ENCODE measurements at regions of chr2 and their contacts with region 1.

Region 1: GRCh38 chr2:54704688-54705605 is 18.5 kb upstream of the EML6 start:
- DNase-seq: peak in 6 of 9 donors; percentile 26 to 69 (median 58)
- ATAC-seq: peak; percentile 74
- H3K4me3 ChIP-seq: no peak overlapping the region
- H3K4me3 Mint-ChIP-seq: no peak overlapping the region
- H3K27ac ChIP-seq: no peak overlapping the region
- H3K27ac Mint-ChIP-seq: no peak overlapping the region
- H3K4me1 ChIP-seq: no peaks in the 10 kb centered on the region
- H3K4me1 Mint-ChIP-seq: peaks cover 0 to 18% (median 0%) of the 10 kb centered on the region in 7 donors
- H3K27me3 ChIP-seq: no peaks in the 10 kb centered on the region
- H3K27me3 Mint-ChIP-seq: peaks cover 10 to 59% (median 15%) of the 10 kb centered on the region in 5 donors

Region 2: GRCh38 chr2:53740170-53740569 is 964.8 kb before region 1 on chr2:
- CTCF ChIA-PET with region 1: no interaction called
- POLR2A ChIA-PET with region 1: no interaction called
- intact Hi-C with region 1: no loop called
- DNase-seq: no peak
- ATAC-seq: no peak
- H3K4me3 ChIP-seq: no peak overlapping the region
- H3K4me3 Mint-ChIP-seq: no peak overlapping the region
- H3K27ac ChIP-seq: no peak overlapping the region
- H3K27ac Mint-ChIP-seq: no peak overlapping the region
- H3K4me1 ChIP-seq: no peaks in the 10 kb centered on the region
- H3K4me1 Mint-ChIP-seq: peaks cover 5 to 26% (median 17%) of the 10 kb centered on the region in 7 donors
- H3K27me3 ChIP-seq: no peaks in the 10 kb centered on the region
- H3K27me3 Mint-ChIP-seq: no peaks in the 10 kb centered on the region

Region 3: DNA sequence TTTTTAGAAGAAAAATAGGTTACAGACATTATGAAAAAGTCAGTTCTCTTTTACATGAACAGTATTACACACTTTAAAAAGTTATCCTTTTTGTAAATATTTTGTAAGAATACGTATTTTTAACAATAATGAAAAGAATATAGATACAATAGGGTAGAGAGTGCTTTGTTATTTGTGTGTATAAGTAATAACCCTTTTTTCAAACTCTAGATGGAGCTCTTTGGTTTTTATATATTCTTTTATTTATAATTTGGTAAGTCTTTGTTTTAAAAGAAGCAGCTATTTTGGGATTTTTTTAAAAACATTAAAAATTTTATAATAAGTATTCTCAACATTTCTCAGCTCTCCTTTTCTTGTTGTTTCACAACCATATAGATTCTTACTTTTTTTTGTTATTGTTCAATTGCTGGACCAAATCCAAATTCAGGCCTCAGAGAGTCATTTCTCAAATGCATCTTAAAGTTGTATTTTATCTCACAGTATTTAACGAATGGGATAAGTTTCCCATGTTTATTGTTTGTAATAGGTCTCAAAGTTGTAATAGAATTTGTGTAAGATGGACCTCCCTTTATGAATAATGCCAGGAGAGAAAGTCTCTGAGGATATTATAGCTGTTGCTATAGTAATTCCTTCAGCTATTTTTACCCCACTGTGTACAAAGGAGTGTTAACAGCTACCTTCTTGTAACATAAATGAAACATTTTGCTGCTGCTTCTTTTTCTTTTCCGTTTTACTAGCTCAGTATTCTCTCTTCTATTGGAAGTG is 543.1 kb before region 1 on chr2:
- CTCF ChIA-PET with region 1: interaction called, 3 read pairs
- POLR2A ChIA-PET with region 1: no interaction called
- intact Hi-C with region 1: loop called in 1 of 2 experiments (anchors 2 kb)
- DNase-seq: no peak
- ATAC-seq: no peak
- H3K4me3 ChIP-seq: no peak overlapping the region
- H3K4me3 Mint-ChIP-seq: no peak overlapping the region
- H3K27ac ChIP-seq: no peak overlapping the region
- H3K27ac Mint-ChIP-seq: no peak overlapping the region
- H3K4me1 ChIP-seq: no peaks in the 10 kb centered on the region
- H3K4me1 Mint-ChIP-seq: no peaks in the 10 kb centered on the region
- H3K27me3 ChIP-seq: no peaks in the 10 kb centered on the region
- H3K27me3 Mint-ChIP-seq: no peaks in the 10 kb centered on the region

Region 4: GRCh38 chr2:54558188-54559005 is 146.6 kb before region 1 on chr2:
- CTCF ChIA-PET with region 1: interaction called, 5 read pairs
- POLR2A ChIA-PET with region 1: no interaction called
- intact Hi-C with region 1: loop called in 1 of 2 experiments (anchors 1 kb)
- DNase-seq: peak; percentile 48 to 75 (median 64)
- ATAC-seq: peak; percentile 82
- H3K4me3 ChIP-seq: peak overlapping the region; percentile 94
- H3K4me3 Mint-ChIP-seq: peak overlapping the region; percentile 86 to 100 (median 98)
- H3K27ac ChIP-seq: peak overlapping the region; percentile 86
- H3K27ac Mint-ChIP-seq: peak overlapping the region; percentile 90 to 98 (median 96)
- H3K4me1 ChIP-seq: peaks cover 10 to 11% of the 10 kb centered on the region in 2 donors
- H3K4me1 Mint-ChIP-seq: peaks cover 29 to 65% (median 59%) of the 10 kb centered on the region in 7 donors
- H3K27me3 ChIP-seq: no peaks in the 10 kb centered on the region
- H3K27me3 Mint-ChIP-seq: no peaks in the 10 kb centered on the region

Region 5: GRCh38 chr2:54665436-54665856 is 39.5 kb before region 1 on chr2:
- CTCF ChIA-PET with region 1: interaction called, 8 read pairs
- POLR2A ChIA-PET with region 1: no interaction called
- intact Hi-C with region 1: loop called (anchors 1 to 5 kb)
- DNase-seq: peak in 7 of 9 donors; percentile 15 to 61 (median 50)
- ATAC-seq: peak; percentile 82
- H3K4me3 ChIP-seq: no peak overlapping the region
- H3K4me3 Mint-ChIP-seq: no peak overlapping the region
- H3K27ac ChIP-seq: no peak overlapping the region
- H3K27ac Mint-ChIP-seq: peak overlapping the region in 8 of 9 donors; percentile 42 to 96 (median 86)
- H3K4me1 ChIP-seq: no peaks in the 10 kb centered on the region
- H3K4me1 Mint-ChIP-seq: peaks cover 0 to 20% (median 5%) of the 10 kb centered on the region in 7 donors
- H3K27me3 ChIP-seq: no peaks in the 10 kb centered on the region
- H3K27me3 Mint-ChIP-seq: no peaks in the 10 kb centered on the region

Region 6: DNA sequence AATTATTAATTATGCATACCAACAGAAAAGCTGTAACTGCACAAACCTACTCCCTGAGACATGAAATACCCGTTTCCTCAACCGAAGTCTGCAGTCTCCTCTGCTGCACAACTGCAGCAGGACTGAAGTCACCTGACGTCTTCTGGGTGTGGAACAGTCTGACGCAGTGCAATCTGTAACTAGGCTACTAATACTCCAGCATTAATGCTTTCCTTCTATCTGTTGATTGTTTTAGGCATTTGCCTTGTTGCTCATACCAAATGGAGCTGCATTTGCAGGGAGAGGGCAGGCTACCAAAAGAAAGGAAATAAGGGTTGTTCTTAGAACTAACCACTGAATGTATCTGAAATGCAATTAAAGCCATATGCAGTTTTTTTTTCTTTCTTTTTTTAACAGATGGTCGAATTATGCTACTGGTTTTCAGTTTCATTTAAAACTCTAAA is 305.2 kb after region 1 on chr2:
- CTCF ChIA-PET with region 1: interaction called, 5 read pairs
- POLR2A ChIA-PET with region 1: no interaction called
- intact Hi-C with region 1: loop called in 1 of 2 experiments (anchors 5 kb)
- DNase-seq: peak; percentile 15 to 71 (median 60)
- ATAC-seq: peak; percentile 94
- H3K4me3 ChIP-seq: peak overlapping the region; percentile 58
- H3K4me3 Mint-ChIP-seq: peak overlapping the region; percentile 88 to 97 (median 92)
- H3K27ac ChIP-seq: peak overlapping the region; percentile 68
- H3K27ac Mint-ChIP-seq: peak overlapping the region; percentile 82 to 96 (median 90)
- H3K4me1 ChIP-seq: peaks cover 27 to 29% of the 10 kb centered on the region in 2 donors
- H3K4me1 Mint-ChIP-seq: peaks cover 44 to 91% (median 79%) of the 10 kb centered on the region in 7 donors
- H3K27me3 ChIP-seq: no peaks in the 10 kb centered on the region
- H3K27me3 Mint-ChIP-seq: no peaks in the 10 kb centered on the region

Measured in naive thymus-derived CD4-positive, alpha-beta T cell (primary cell).